A673 (cell line): ENCODE measurements at regions of chr19 and their contacts with region 1.

Region 1: GRCh38 chr19:50794439-50795237 is 4.4 kb downstream of the ACP4 start:
- DNase-seq: peak; percentile 69
- H3K4me3 ChIP-seq: no peak overlapping the region
- H3K27ac ChIP-seq: peak overlapping the region; percentile 5
- H3K4me1 ChIP-seq: peaks cover 16% of the 10 kb centered on the region
- H3K27me3 ChIP-seq: no peaks in the 10 kb centered on the region
- CTCF ChIP-seq: peak; percentile 58

Region 2: DNA sequence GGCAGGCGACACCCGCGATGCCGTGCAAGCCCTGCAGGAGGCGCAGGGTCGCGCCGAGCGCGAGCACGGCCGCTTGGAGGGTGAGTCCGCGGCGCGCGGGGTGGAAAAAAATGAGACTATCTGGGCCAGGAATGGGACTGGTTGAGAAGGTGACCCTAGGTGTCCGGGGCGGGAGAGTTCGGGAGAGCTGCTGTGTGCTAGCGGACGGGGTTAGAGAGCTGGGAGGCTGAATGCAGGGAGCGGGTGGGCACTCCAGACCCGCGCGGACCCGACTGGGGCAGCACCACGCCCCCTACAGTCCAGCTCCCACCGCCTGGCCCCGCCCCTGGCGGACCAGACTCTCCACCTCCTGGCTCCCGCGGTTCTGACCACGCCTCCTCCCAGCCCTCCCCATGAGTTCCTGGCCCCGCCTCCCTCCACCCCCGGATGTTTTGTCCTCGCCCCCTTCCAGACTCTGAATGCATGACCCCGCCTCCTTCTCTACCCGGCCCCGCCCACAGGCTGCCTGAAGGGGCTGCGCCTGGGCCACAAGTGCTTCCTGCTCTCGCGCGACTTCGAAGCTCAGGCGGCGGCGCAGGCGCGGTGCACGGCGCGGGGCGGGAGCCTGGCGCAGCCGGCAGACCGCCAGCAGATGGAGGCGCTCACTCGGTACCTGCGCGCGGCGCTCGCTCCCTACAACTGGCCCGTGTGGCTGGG is 70.0 kb before region 1 on chr19:
- CTCF ChIA-PET with region 1: interaction called, 15 read pairs
- POLR2A ChIA-PET with region 1: no interaction called
- intact Hi-C with region 1: no loop called
- DNase-seq: peak; percentile 100
- H3K4me3 ChIP-seq: peak overlapping the region; percentile 61
- H3K27ac ChIP-seq: peak overlapping the region; percentile 85
- H3K4me1 ChIP-seq: peaks cover 71% of the 10 kb centered on the region
- H3K27me3 ChIP-seq: no peaks in the 10 kb centered on the region
- CTCF ChIP-seq: peak; percentile 93

Region 3: DNA sequence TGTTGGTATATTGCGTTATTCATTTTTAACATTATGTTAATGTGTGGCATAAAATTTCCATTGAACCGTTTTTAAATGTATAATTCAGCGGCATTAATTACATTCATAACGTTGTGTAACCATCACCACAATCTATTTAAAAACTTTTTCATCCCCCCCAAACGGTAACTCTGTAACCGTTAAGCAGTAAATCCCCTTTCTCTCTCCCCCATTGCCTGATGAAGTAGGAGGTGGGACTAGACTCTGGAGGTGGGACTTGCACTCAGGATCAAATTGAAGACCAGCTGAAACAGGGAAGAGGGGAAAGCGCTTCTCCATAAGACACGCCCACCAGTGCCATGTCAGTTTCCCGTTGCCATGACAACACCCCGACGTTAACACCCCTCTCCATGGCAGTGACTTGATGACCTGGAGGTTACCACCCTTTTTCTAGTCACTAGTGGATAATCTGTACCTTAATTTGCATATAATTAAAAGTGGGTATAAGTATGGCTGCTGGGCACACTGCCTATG is 54.7 kb before region 1 on chr19:
- CTCF ChIA-PET with region 1: no interaction called
- POLR2A ChIA-PET with region 1: no interaction called
- intact Hi-C with region 1: no loop called
- DNase-seq: peak; percentile 93
- H3K4me3 ChIP-seq: peak overlapping the region; percentile 25
- H3K27ac ChIP-seq: peak overlapping the region; percentile 88
- H3K4me1 ChIP-seq: peaks cover 51% of the 10 kb centered on the region
- H3K27me3 ChIP-seq: no peaks in the 10 kb centered on the region
- CTCF ChIP-seq: no peak

Region 4: DNA sequence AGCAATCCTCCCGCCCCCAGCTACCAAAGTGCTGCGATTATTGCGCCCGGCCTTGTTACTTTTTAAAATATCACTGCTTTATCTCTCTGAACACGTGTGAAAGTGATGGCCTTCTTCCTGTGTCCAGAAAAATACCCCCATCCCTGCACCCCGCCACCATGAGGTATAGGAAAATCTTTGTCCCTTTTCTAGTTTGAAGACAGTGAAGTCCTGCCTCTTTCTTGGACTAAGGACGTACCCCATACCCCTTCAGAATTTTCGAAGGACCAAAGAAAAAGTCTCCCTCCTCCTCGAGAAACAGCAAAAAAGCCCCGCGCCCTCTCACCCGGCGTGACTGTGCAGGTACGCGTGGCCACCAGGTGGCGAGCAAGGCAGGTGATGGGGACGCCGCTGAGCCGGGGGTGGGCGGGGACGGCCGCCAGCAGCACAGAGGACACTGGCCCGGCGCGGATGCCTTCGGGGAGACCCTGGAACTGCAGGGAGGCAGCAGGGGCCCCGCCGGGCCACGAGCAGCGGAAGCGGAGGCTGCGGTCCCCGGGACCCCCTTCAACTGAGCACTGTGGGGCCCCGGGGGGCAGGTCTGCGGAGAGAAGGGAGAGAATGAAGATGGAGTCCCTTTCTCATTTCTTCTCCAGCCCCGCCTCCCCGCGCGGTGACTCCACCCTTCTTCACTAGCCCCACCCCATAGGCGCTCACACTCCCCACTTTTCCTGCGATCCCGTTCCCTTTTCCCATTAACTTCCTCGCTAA is 544.1 kb after region 1 on chr19:
- CTCF ChIA-PET with region 1: no interaction called
- POLR2A ChIA-PET with region 1: interaction called, 17 read pairs
- intact Hi-C with region 1: no loop called
- DNase-seq: peak; percentile 86
- H3K4me3 ChIP-seq: peak overlapping the region; percentile 61
- H3K27ac ChIP-seq: peak overlapping the region; percentile 24
- H3K4me1 ChIP-seq: peaks cover 8% of the 10 kb centered on the region
- H3K27me3 ChIP-seq: no peaks in the 10 kb centered on the region
- CTCF ChIP-seq: peak; percentile 89